Dendritic cell treated with granulocyte-macrophage colony-stimulating factor and Interleukin-4, amounts not matched to agents 40 ng/mL and 50 ng/mL, for 4 days (primary cell): ENCODE measurements at regions of chr12 and their contacts with region 1.

Region 1: GRCh38 chr12:4037747-4038312 is 164.6 kb upstream of the PARP11 start:
- H3K4me3 Mint-ChIP-seq: no peak overlapping the region
- H3K27ac Mint-ChIP-seq: no peak overlapping the region
- H3K4me1 Mint-ChIP-seq: peaks cover 37% of the 10 kb centered on the region
- H3K27me3 Mint-ChIP-seq: peaks cover 28% of the 10 kb centered on the region

Region 2: DNA sequence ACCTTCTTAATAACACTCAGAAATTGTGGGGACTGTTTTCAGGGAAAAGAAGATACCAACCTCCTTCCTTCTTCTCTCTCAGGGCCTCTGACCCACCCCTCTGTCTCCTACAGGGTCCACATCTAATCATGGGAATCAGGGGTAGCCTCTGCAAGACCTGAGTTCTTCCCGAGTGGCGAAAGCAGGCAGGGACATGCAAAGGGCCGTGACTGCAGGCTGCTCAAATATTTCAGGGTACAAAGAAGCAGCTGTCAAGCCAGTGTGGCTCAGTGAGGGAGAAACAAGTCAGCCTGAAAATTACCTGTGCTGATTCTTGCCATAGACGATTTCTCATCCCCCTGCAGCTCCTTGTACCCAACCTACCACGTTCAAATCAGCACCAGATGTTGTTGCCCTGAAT is 41.5 kb before region 1 on chr12:
- intact Hi-C with region 1: loop called (anchors 2 kb)
- H3K4me3 Mint-ChIP-seq: no peak overlapping the region
- H3K27ac Mint-ChIP-seq: no peak overlapping the region
- H3K4me1 Mint-ChIP-seq: peaks cover 15% of the 10 kb centered on the region
- H3K27me3 Mint-ChIP-seq: peaks cover 46% of the 10 kb centered on the region

Region 3: GRCh38 chr12:4084573-4084972 is 46.7 kb after region 1 on chr12:
- intact Hi-C with region 1: no loop called
- H3K4me3 Mint-ChIP-seq: no peak overlapping the region
- H3K27ac Mint-ChIP-seq: no peak overlapping the region
- H3K4me1 Mint-ChIP-seq: peaks cover 6% of the 10 kb centered on the region
- H3K27me3 Mint-ChIP-seq: peaks cover 20% of the 10 kb centered on the region

Region 4: GRCh38 chr12:4099276-4099675 is 61.4 kb after region 1 on chr12:
- intact Hi-C with region 1: no loop called
- H3K4me3 Mint-ChIP-seq: no peak overlapping the region
- H3K27ac Mint-ChIP-seq: no peak overlapping the region
- H3K4me1 Mint-ChIP-seq: no peaks in the 10 kb centered on the region
- H3K27me3 Mint-ChIP-seq: peaks cover 49% of the 10 kb centered on the region